ENCODE measurements at regions of chr3 and their contacts with region 1.

Region 1: GRCh38 chr3:74624301-74624700 is 9.8 kb upstream of the CNTN3 start:
- DNase-seq: no peak
- ATAC-seq: no peak

Region 2: GRCh38 chr3:74267588-74268184 is 356.6 kb before region 1 on chr3:
- intact Hi-C with region 1: loop called (anchors 10 kb)
- DNase-seq: no peak
- ATAC-seq: peak; percentile 68